ENCODE measurements at regions of chr9 and their contacts with region 1.

Region 1: DNA sequence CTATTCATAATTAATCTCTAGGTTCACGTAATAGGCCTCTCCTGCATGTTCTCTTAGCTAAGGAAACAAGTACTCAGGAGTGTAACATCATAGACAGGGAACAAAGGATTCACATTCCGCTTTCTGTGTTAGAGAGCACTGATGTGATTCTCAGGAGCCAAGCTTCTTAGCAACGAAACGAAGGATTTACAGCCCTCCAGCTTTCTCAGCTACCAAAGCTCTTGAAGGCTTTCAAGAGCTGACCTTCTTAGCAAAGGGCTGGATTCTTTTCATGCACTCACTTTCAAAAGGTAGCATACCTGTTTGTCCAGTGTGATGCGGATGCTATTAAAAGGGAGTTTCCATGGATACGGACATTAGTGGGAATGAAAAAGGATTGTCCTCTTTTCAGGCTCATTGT is 107.4 kb downstream of the TUSC1 start:
- DNase-seq: no peak
- H3K4me3 ChIP-seq: no peak overlapping the region
- H3K27ac ChIP-seq: no peak overlapping the region
- H3K4me1 ChIP-seq: no peaks in the 10 kb centered on the region
- H3K27me3 ChIP-seq: no peaks in the 10 kb centered on the region
- CTCF ChIP-seq: no peak
- EP300 ChIP-seq: no peak
- POLR2A ChIP-seq: no peak

Region 2: GRCh38 chr9:25678162-25678666 is 107.4 kb after region 1 on chr9 and contains the start of gene TUSC1:
- in situ Hi-C with region 1: no loop called
- intact Hi-C with region 1: loop called (anchors 10 kb)
- DNase-seq: peak; percentile 84
- H3K4me3 ChIP-seq: peak within 1 kb of the TSS; percentile 62 to 97 (median 88)
- H3K27ac ChIP-seq: peak within 1 kb of the TSS; percentile 97 to 100 (median 100)
- H3K4me1 ChIP-seq: peaks cover 0 to 19% (median 9%) of the 10 kb centered on the region in 4 donors
- H3K27me3 ChIP-seq: no peaks in the 10 kb centered on the region
- CTCF ChIP-seq: peak in 4 of 5 experiments; percentile 7 to 53 (median 22)
- EP300 ChIP-seq: peak; percentile 51
- POLR2A ChIP-seq: no peak
- total RNA-seq, gene TUSC1: 13.5 to 24.7 (median 17.5) TPM

Region 3: GRCh38 chr9:25742256-25742655 is 171.5 kb after region 1 on chr9:
- in situ Hi-C with region 1: no loop called
- intact Hi-C with region 1: no loop called
- DNase-seq: no peak
- H3K4me3 ChIP-seq: no peak overlapping the region
- H3K27ac ChIP-seq: no peak overlapping the region
- H3K4me1 ChIP-seq: no peaks in the 10 kb centered on the region
- H3K27me3 ChIP-seq: no peaks in the 10 kb centered on the region
- CTCF ChIP-seq: no peak
- EP300 ChIP-seq: no peak
- POLR2A ChIP-seq: no peak

Region 4: GRCh38 chr9:25755951-25756350 is 185.1 kb after region 1 on chr9:
- in situ Hi-C with region 1: no loop called
- intact Hi-C with region 1: no loop called
- DNase-seq: no peak
- H3K4me3 ChIP-seq: no peak overlapping the region
- H3K27ac ChIP-seq: no peak overlapping the region
- H3K4me1 ChIP-seq: peaks cover 0 to 4% (median 0%) of the 10 kb centered on the region in 4 donors
- H3K27me3 ChIP-seq: no peaks in the 10 kb centered on the region
- CTCF ChIP-seq: no peak
- EP300 ChIP-seq: no peak
- POLR2A ChIP-seq: no peak